Ascending aorta (tissue), 2 donors: ENCODE measurements at regions of chr9 and their contacts with region 1.

Region 1: GRCh38 chr9:92616655-92617111 is 53.2 kb downstream of the IPPK start:
- DNase-seq: no peak
- H3K4me3 ChIP-seq: peak overlapping the region; percentile 35 to 49
- H3K27ac ChIP-seq: peak overlapping the region; percentile 77
- H3K4me1 ChIP-seq: peaks cover 11 to 41% of the 10 kb centered on the region in 2 donors
- H3K27me3 ChIP-seq: no peaks in the 10 kb centered on the region
- CTCF ChIP-seq: no peak

Region 2: GRCh38 chr9:92289708-92290390 is 326.8 kb before region 1 on chr9:
- intact Hi-C with region 1: no loop called
- DNase-seq: no peak
- H3K4me3 ChIP-seq: no peak overlapping the region
- H3K27ac ChIP-seq: no peak overlapping the region
- H3K4me1 ChIP-seq: peaks cover 8 to 12% of the 10 kb centered on the region in 2 donors
- H3K27me3 ChIP-seq: no peaks in the 10 kb centered on the region
- CTCF ChIP-seq: no peak

Region 3: GRCh38 chr9:92312887-92313623 is 303.6 kb before region 1 on chr9:
- intact Hi-C with region 1: no loop called
- DNase-seq: no peak
- H3K4me3 ChIP-seq: no peak overlapping the region
- H3K27ac ChIP-seq: no peak overlapping the region
- H3K4me1 ChIP-seq: no peaks in the 10 kb centered on the region
- H3K27me3 ChIP-seq: no peaks in the 10 kb centered on the region
- CTCF ChIP-seq: no peak

Region 4: DNA sequence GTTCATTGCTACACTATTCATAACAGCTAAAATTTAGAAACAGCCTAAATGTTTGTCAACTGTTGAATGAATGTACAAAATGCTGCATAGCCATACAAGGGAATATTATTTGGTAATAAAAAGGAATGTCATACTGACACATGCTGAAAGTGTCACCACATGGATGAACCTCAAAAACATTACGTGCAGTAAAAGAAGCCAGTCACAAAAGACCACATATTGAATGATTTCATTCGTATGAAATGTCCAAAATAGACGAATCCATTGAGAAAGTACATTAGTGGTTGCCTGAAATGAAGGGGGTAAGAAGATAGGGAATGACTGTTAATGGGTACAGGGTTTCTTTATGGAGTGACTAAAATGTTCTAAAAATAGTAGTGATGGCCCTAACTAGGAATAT is 69.3 kb before region 1 on chr9:
- intact Hi-C with region 1: no loop called
- DNase-seq: no peak
- H3K4me3 ChIP-seq: no peak overlapping the region
- H3K27ac ChIP-seq: no peak overlapping the region
- H3K4me1 ChIP-seq: no peaks in the 10 kb centered on the region
- H3K27me3 ChIP-seq: no peaks in the 10 kb centered on the region
- CTCF ChIP-seq: no peak

Region 5: GRCh38 chr9:92590377-92590776 is 26.3 kb before region 1 on chr9:
- intact Hi-C with region 1: loop called (anchors 2 kb)
- DNase-seq: peak in 1 of 2 donors; percentile 83
- H3K4me3 ChIP-seq: no peak overlapping the region
- H3K27ac ChIP-seq: peak overlapping the region; percentile 26 to 29
- H3K4me1 ChIP-seq: peaks cover 4 to 36% of the 10 kb centered on the region in 2 donors
- H3K27me3 ChIP-seq: no peaks in the 10 kb centered on the region
- CTCF ChIP-seq: no peak